Ascending aorta (tissue), 2 donors: ENCODE measurements at regions of chr13 and their contacts with region 1.

Region 1: DNA sequence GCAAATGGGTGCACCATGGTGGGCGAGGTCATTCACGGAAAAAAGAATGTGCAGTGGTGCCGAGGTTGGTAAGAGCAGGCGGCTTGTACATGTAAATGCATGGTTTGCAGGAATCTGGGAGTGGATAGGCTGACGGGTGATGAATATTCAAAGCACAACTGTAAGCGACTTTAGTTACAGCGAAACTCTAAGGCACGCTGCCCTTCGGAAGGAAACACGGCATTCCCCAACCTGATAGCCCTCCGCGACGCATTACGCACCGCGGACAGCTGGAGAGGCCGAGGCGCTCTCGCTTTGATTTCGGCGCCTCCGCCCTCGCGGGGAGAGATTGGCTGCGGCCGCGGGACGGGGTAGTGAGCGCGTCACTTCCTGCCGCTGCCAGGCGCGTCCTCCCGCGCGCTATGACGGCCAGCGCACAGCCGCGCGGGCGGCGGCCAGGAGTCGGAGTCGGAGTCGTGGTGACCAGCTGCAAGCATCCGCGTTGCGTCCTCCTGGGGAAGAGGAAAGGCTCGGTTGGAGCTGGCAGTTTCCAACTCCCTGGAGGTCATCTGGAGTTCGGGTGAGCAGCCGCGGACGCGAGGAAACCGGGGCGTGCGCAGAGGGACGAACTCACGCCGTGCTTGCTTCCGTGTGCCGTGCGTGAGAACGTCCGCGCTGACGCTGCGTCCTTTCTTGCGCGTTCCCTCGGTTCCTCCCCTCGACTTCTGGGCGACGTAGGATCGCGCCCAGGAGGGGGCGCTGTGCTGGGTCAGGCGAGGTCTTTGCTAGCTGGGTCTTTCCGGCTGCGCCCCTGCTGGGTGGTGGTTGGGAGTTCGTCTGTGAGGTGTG is at the start of gene NUDT15:
- DNase-seq: peak; percentile 61 to 95
- H3K4me3 ChIP-seq: peak within 1 kb of the TSS; percentile 78 to 91
- H3K27ac ChIP-seq: peak within 1 kb of the TSS; percentile 94 to 96
- H3K4me1 ChIP-seq: peaks cover 0 to 11% of the 10 kb centered on the region in 2 donors
- H3K27me3 ChIP-seq: no peaks in the 10 kb centered on the region
- CTCF ChIP-seq: peak; percentile 95 to 97 (median 96)
- total RNA-seq, gene NUDT15: 4.2 TPM

Region 2: DNA sequence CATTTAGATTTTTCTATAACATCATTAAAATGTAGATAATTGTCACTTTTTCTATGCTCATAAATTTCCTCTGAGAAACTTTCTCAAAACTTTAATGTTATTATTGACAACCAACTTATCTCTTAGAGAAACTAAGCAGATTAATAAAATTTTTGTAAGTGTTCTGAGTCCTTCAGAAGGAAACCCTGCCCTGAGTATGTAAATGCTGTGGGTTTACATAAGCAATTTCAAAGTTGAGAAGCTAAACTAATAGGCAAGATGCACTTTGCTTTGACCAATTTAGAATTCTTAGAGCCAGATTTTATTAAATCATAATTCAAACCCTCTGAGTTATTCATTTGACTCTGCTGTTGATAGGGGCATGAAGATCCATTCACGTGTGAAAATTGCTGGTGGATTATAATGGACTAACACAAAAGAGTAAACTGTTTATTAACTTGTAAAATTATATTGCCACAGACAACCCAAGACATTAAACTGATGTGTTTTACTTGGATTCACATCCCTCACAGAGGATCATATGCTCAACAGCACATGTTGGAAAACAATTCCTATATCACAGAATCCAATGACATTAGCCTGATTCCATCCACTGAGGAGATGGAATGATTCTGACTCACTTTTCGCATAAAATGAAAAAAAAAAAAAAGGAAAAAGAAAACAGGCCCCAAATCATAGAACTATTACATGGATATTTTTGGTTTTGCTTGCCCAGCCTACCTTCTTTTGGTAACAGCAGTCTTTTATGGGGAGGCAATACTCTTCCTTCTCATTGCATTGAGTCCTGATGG is 687.0 kb before region 1 on chr13:
- intact Hi-C with region 1: no loop called
- DNase-seq: no peak
- H3K4me3 ChIP-seq: no peak overlapping the region
- H3K27ac ChIP-seq: no peak overlapping the region
- H3K4me1 ChIP-seq: no peaks in the 10 kb centered on the region
- H3K27me3 ChIP-seq: no peaks in the 10 kb centered on the region
- CTCF ChIP-seq: no peak

Region 3: GRCh38 chr13:48000778-48001628 is 36.6 kb before region 1 on chr13 and contains the start of gene SUCLA2:
- intact Hi-C with region 1: loop called (anchors 2 kb)
- DNase-seq: peak; percentile 38 to 93
- H3K4me3 ChIP-seq: peak within 1 kb of the TSS; percentile 91 to 99
- H3K27ac ChIP-seq: peak within 1 kb of the TSS; percentile 74 to 75
- H3K4me1 ChIP-seq: peaks cover 0 to 3% of the 10 kb centered on the region in 2 donors
- H3K27me3 ChIP-seq: no peaks in the 10 kb centered on the region
- CTCF ChIP-seq: no peak
- total RNA-seq, gene SUCLA2: 33.0 TPM